CD8-positive, alpha-beta T cell (primary cell): ENCODE measurements at regions of chr6 and their contacts with region 1.

Region 1: GRCh38 chr6:108558372-108559096 is 2.2 kb upstream of the FOXO3 start:
- DNase-seq: peak; percentile 92 to 100 (median 96)
- ATAC-seq: peak; percentile 68
- H3K4me3 ChIP-seq: peak overlapping the region; percentile 92 to 97
- H3K4me3 Mint-ChIP-seq: peak overlapping the region; percentile 97
- H3K27ac ChIP-seq: peak overlapping the region; percentile 87 to 99
- H3K27ac Mint-ChIP-seq: peak overlapping the region; percentile 99
- H3K4me1 ChIP-seq: peaks cover 16% of the 10 kb centered on the region
- H3K4me1 Mint-ChIP-seq: peaks cover 24% of the 10 kb centered on the region
- H3K27me3 ChIP-seq: no peaks in the 10 kb centered on the region
- H3K27me3 Mint-ChIP-seq: peaks cover 2% of the 10 kb centered on the region
- CTCF ChIP-seq: no peak

Region 2: GRCh38 chr6:108260809-108261569 is 297.5 kb before region 1 on chr6 and contains the start of gene SNX3:
- CTCF ChIA-PET with region 1: no interaction called
- POLR2A ChIA-PET with region 1: interaction called, 14 read pairs
- intact Hi-C with region 1: loop called (anchors 1 to 2 kb)
- DNase-seq: peak; percentile 76 to 95 (median 85)
- ATAC-seq: peak; percentile 79
- H3K4me3 ChIP-seq: peak within 1 kb of the TSS; percentile 64 to 76
- H3K4me3 Mint-ChIP-seq: peak within 1 kb of the TSS; percentile 89
- H3K27ac ChIP-seq: peak within 1 kb of the TSS; percentile 82 to 95
- H3K27ac Mint-ChIP-seq: peak within 1 kb of the TSS; percentile 97
- H3K4me1 ChIP-seq: peaks cover 17% of the 10 kb centered on the region
- H3K4me1 Mint-ChIP-seq: peaks cover 36% of the 10 kb centered on the region
- H3K27me3 ChIP-seq: no peaks in the 10 kb centered on the region
- H3K27me3 Mint-ChIP-seq: no peaks in the 10 kb centered on the region
- CTCF ChIP-seq: no peak
- total RNA-seq, gene SNX3: 37.0 to 40.7 TPM

Region 3: DNA sequence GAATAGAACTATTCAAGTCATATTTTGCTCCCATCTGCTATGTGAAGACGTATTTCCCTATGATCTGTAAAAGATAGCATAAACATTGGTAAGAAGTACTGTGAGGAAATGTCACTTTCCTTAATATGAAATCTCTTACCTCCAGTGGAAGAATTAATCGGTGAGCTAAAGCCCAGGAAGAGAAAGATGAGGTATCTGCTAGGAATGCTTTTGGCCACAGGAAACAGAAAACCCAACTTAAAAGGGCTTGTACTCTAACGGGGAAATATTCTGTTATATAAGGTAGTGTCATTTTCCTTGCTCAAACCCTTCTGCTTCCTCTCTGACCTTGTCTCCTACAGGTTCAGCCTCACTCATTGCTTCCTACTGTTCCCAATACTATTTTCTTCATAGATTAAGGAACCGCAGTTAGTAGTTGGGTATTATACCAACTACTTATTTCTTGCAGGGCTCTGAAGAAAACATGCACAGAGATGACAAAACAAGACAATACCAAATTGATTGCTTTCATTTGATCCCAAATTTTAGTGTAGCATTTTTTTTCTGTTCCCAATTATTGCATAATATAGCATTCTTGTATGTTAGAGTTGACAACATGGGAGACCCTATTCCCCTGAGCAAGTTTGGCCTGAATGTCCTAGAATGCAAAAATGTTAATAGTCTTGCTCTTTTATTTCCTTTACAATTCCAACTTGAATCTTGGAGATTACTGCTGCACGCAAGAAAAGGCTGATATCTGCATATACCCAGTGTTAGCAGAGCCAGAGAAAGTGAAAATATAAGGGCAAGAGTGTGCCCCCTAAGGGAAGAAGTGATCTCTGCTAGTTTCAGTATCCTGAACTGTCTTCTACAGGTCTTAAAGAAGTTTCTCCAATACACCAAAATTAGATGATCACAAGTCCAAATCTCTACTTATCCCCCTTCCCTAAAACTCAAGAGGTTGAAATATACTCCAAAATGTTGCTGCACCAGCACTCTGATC is 198.3 kb before region 1 on chr6:
- CTCF ChIA-PET with region 1: no interaction called
- POLR2A ChIA-PET with region 1: no interaction called
- intact Hi-C with region 1: no loop called
- DNase-seq: peak in 1 of 9 experiments; percentile 5
- ATAC-seq: no peak
- H3K4me3 ChIP-seq: no peak overlapping the region
- H3K4me3 Mint-ChIP-seq: no peak overlapping the region
- H3K27ac ChIP-seq: no peak overlapping the region
- H3K27ac Mint-ChIP-seq: no peak overlapping the region
- H3K4me1 ChIP-seq: no peaks in the 10 kb centered on the region
- H3K4me1 Mint-ChIP-seq: peaks cover 3% of the 10 kb centered on the region
- H3K27me3 ChIP-seq: no peaks in the 10 kb centered on the region
- H3K27me3 Mint-ChIP-seq: no peaks in the 10 kb centered on the region
- CTCF ChIP-seq: no peak

Region 4: GRCh38 chr6:108423982-108424705 is 134.4 kb before region 1 on chr6:
- CTCF ChIA-PET with region 1: no interaction called
- POLR2A ChIA-PET with region 1: no interaction called
- intact Hi-C with region 1: no loop called
- DNase-seq: no peak
- ATAC-seq: no peak
- H3K4me3 ChIP-seq: no peak overlapping the region
- H3K4me3 Mint-ChIP-seq: no peak overlapping the region
- H3K27ac ChIP-seq: no peak overlapping the region
- H3K27ac Mint-ChIP-seq: no peak overlapping the region
- H3K4me1 ChIP-seq: no peaks in the 10 kb centered on the region
- H3K4me1 Mint-ChIP-seq: no peaks in the 10 kb centered on the region
- H3K27me3 ChIP-seq: no peaks in the 10 kb centered on the region
- H3K27me3 Mint-ChIP-seq: no peaks in the 10 kb centered on the region
- CTCF ChIP-seq: no peak

Region 5: GRCh38 chr6:108689247-108690161 is 131.0 kb after region 1 on chr6:
- CTCF ChIA-PET with region 1: no interaction called
- POLR2A ChIA-PET with region 1: no interaction called
- intact Hi-C with region 1: loop called in 1 of 2 experiments (anchors 10 kb)
- DNase-seq: no peak
- ATAC-seq: no peak
- H3K4me3 ChIP-seq: no peak overlapping the region
- H3K4me3 Mint-ChIP-seq: no peak overlapping the region
- H3K27ac ChIP-seq: no peak overlapping the region
- H3K27ac Mint-ChIP-seq: no peak overlapping the region
- H3K4me1 ChIP-seq: no peaks in the 10 kb centered on the region
- H3K4me1 Mint-ChIP-seq: peaks cover 18% of the 10 kb centered on the region
- H3K27me3 ChIP-seq: no peaks in the 10 kb centered on the region
- H3K27me3 Mint-ChIP-seq: no peaks in the 10 kb centered on the region
- CTCF ChIP-seq: no peak

Region 6: GRCh38 chr6:108848116-108848868 is 289.8 kb after region 1 on chr6 and contains the start of gene ARMC2:
- CTCF ChIA-PET with region 1: no interaction called
- POLR2A ChIA-PET with region 1: interaction called, 7 read pairs
- intact Hi-C with region 1: loop called in 1 of 2 experiments (anchors 1 kb)
- DNase-seq: peak; percentile 65 to 94 (median 85)
- ATAC-seq: peak; percentile 88
- H3K4me3 ChIP-seq: peak within 1 kb of the TSS; percentile 63 to 80
- H3K4me3 Mint-ChIP-seq: peak within 1 kb of the TSS; percentile 88
- H3K27ac ChIP-seq: peak within 1 kb of the TSS; percentile 67 to 73
- H3K27ac Mint-ChIP-seq: peak within 1 kb of the TSS; percentile 66
- H3K4me1 ChIP-seq: peaks cover 11% of the 10 kb centered on the region
- H3K4me1 Mint-ChIP-seq: peaks cover 29% of the 10 kb centered on the region
- H3K27me3 ChIP-seq: no peaks in the 10 kb centered on the region
- H3K27me3 Mint-ChIP-seq: no peaks in the 10 kb centered on the region
- CTCF ChIP-seq: no peak
- total RNA-seq, gene ARMC2: 4.2 to 6.1 TPM

Region 7: GRCh38 chr6:109440331-109441068 is 882.0 kb after region 1 on chr6 and contains the starts of genes PPIL6 and SMPD2:
- CTCF ChIA-PET with region 1: no interaction called
- POLR2A ChIA-PET with region 1: interaction called, 3 read pairs
- intact Hi-C with region 1: loop called (anchors 1 to 10 kb)
- DNase-seq: peak; percentile 61 to 92 (median 75)
- ATAC-seq: peak; percentile 79
- H3K4me3 ChIP-seq: peak within 1 kb of the TSS; percentile 68 to 92
- H3K4me3 Mint-ChIP-seq: peak within 1 kb of the TSS; percentile 89
- H3K27ac ChIP-seq: peak within 1 kb of the TSS; percentile 69 to 83
- H3K27ac Mint-ChIP-seq: peak within 1 kb of the TSS; percentile 93
- H3K4me1 ChIP-seq: peaks cover 26% of the 10 kb centered on the region
- H3K4me1 Mint-ChIP-seq: peaks cover 35% of the 10 kb centered on the region
- H3K27me3 ChIP-seq: no peaks in the 10 kb centered on the region
- H3K27me3 Mint-ChIP-seq: no peaks in the 10 kb centered on the region
- CTCF ChIP-seq: peak; percentile 31
- total RNA-seq, gene PPIL6: 1.3 to 1.4 TPM
- total RNA-seq, gene SMPD2: 22.8 to 23.9 TPM

Region 8: GRCh38 chr6:109690737-109691621 is 1132.4 kb after region 1 on chr6 and contains the starts of genes AK9 and FIG4:
- CTCF ChIA-PET with region 1: no interaction called
- POLR2A ChIA-PET with region 1: no interaction called
- intact Hi-C with region 1: loop called in 1 of 2 experiments (anchors 10 kb)
- DNase-seq: peak; percentile 68 to 93 (median 90)
- ATAC-seq: peak; percentile 96
- H3K4me3 ChIP-seq: peak within 1 kb of the TSS; percentile 85 to 91
- H3K4me3 Mint-ChIP-seq: peak within 1 kb of the TSS; percentile 93
- H3K27ac ChIP-seq: peak within 1 kb of the TSS; percentile 81 to 91
- H3K27ac Mint-ChIP-seq: peak within 1 kb of the TSS; percentile 98
- H3K4me1 ChIP-seq: peaks cover 22% of the 10 kb centered on the region
- H3K4me1 Mint-ChIP-seq: peaks cover 27% of the 10 kb centered on the region
- H3K27me3 ChIP-seq: no peaks in the 10 kb centered on the region
- H3K27me3 Mint-ChIP-seq: no peaks in the 10 kb centered on the region
- CTCF ChIP-seq: no peak
- total RNA-seq, gene AK9: 5.1 to 6.5 TPM
- total RNA-seq, gene FIG4: 2.3 TPM